ENCODE measurements at regions of chr18 and their contacts with region 1.

Region 1: GRCh38 chr18:47917923-47918610 is 12.4 kb downstream of the SMAD2 start:
- DNase-seq: no peak
- ATAC-seq: no peak
- H3K4me3 ChIP-seq: no peak overlapping the region
- H3K4me3 Mint-ChIP-seq: peak overlapping the region; percentile 58
- H3K27ac ChIP-seq: no peak overlapping the region
- H3K27ac Mint-ChIP-seq: peak overlapping the region; percentile 88
- H3K4me1 ChIP-seq: peaks cover 42% of the 10 kb centered on the region
- H3K4me1 Mint-ChIP-seq: peaks cover 85% of the 10 kb centered on the region
- H3K27me3 ChIP-seq: no peaks in the 10 kb centered on the region
- H3K27me3 Mint-ChIP-seq: no peaks in the 10 kb centered on the region
- CTCF ChIP-seq: no peak

Region 2: GRCh38 chr18:47863041-47863440 is 55.0 kb before region 1 on chr18:
- CTCF ChIA-PET with region 1: no interaction called
- POLR2A ChIA-PET with region 1: no interaction called
- intact Hi-C with region 1: no loop called
- DNase-seq: no peak
- ATAC-seq: no peak
- H3K4me3 ChIP-seq: no peak overlapping the region
- H3K4me3 Mint-ChIP-seq: no peak overlapping the region
- H3K27ac ChIP-seq: no peak overlapping the region
- H3K27ac Mint-ChIP-seq: no peak overlapping the region
- H3K4me1 ChIP-seq: no peaks in the 10 kb centered on the region
- H3K4me1 Mint-ChIP-seq: no peaks in the 10 kb centered on the region
- H3K27me3 ChIP-seq: no peaks in the 10 kb centered on the region
- H3K27me3 Mint-ChIP-seq: no peaks in the 10 kb centered on the region
- CTCF ChIP-seq: no peak

Region 3: GRCh38 chr18:47901624-47902362 is 16.3 kb before region 1 on chr18:
- CTCF ChIA-PET with region 1: interaction called, 5 read pairs
- POLR2A ChIA-PET with region 1: interaction called, 6 read pairs
- intact Hi-C with region 1: loop called in 1 of 2 experiments (anchors 2 kb)
- DNase-seq: peak in 3 of 9 experiments; percentile 13 to 65 (median 43)
- ATAC-seq: peak; percentile 92
- H3K4me3 ChIP-seq: peak overlapping the region in 1 of 2 experiments; percentile 6
- H3K4me3 Mint-ChIP-seq: peak overlapping the region; percentile 62
- H3K27ac ChIP-seq: peak overlapping the region; percentile 6 to 65
- H3K27ac Mint-ChIP-seq: peak overlapping the region; percentile 91
- H3K4me1 ChIP-seq: peaks cover 33% of the 10 kb centered on the region
- H3K4me1 Mint-ChIP-seq: peaks cover 82% of the 10 kb centered on the region
- H3K27me3 ChIP-seq: no peaks in the 10 kb centered on the region
- H3K27me3 Mint-ChIP-seq: no peaks in the 10 kb centered on the region
- CTCF ChIP-seq: no peak